HCT116 (cell line): ENCODE measurements at regions of chr12 and their contacts with region 1.

Region 1: DNA sequence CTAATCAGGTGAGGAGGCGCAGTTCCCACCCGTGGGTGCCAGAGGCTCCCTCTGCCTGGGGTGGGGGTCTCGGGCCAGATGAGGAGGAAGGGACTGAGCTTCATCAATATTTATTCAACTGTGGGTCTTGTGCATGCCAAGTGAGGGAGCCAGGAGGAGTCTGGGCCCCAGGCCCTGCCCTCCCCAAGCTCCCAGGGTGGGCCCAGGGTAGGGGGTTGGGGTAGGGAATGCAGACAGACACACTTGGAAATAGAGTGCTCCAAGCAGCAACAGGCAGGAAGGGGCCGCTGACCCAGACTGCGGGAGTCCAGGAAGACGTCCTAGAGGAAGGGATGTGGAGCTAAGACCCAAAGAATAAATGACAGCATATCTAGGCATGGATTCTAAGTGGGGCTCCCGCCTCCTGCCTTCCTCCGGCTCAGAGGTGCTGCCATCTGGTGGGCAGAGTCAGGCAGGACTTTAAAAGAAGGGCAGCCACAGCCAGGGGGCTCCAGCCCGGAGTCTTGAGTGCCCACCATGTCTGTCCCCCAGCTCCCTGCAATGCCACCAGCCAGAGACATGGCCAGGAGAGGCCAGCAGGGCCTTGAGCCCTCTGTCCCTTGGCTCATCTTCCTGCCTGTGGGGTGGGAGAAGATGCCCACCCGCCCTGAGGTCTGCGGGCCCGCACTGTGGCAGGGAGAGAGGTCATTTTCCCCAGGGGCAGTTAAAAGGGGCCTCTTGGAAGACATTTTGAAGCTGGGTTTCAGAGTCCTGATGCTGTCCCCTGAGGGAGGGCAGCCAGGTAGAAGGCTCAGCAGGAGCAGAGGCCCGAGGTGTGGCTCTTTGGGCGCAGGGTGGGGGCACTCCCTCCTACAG is 70.1 kb downstream of the PHETA1 start:
- DNase-seq: peak; percentile 33
- ATAC-seq: peak; percentile 94
- H3K4me3 ChIP-seq: no peak overlapping the region
- H3K27ac ChIP-seq: no peak overlapping the region
- H3K4me1 ChIP-seq: no peaks in the 10 kb centered on the region
- H3K27me3 ChIP-seq: no peaks in the 10 kb centered on the region
- CTCF ChIP-seq: peak; percentile 90 to 98 (median 95)
- POLR2A ChIP-seq: no peak
- RAD21 ChIP-seq: peak; percentile 75

Region 2: DNA sequence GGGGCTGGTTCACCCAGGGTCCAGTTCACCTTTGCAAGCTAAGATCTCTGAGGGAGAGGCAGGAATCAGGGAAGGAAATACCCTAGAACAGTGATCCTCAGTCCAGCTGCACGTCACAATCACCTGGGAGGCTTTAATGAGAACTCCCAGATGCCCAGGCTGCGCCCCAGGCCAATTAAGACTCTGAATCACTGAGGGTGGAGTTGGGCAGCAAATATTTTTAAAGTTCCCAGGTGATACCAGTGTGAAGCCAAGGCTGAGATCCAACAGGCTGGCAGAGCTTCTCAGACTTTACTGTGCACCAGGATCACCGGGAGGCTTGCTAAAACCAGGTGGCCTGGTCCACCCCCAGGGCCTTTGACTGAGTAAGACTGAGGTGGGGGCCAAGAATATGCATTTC is 402.2 kb before region 1 on chr12:
- CTCF ChIA-PET with region 1: interaction called, 9 read pairs
- POLR2A ChIA-PET with region 1: no interaction called
- RAD21 ChIA-PET with region 1: no interaction called
- intact Hi-C with region 1: loop called (anchors 2 kb)
- DNase-seq: no peak
- ATAC-seq: no peak
- H3K4me3 ChIP-seq: no peak overlapping the region
- H3K27ac ChIP-seq: no peak overlapping the region
- H3K4me1 ChIP-seq: peaks cover 0 to 37% of the 10 kb centered on the region in 2 experiments; a peak in 2 of 4 replicates
- H3K27me3 ChIP-seq: no peaks in the 10 kb centered on the region
- CTCF ChIP-seq: no peak
- POLR2A ChIP-seq: no peak
- RAD21 ChIP-seq: no peak

Region 3: DNA sequence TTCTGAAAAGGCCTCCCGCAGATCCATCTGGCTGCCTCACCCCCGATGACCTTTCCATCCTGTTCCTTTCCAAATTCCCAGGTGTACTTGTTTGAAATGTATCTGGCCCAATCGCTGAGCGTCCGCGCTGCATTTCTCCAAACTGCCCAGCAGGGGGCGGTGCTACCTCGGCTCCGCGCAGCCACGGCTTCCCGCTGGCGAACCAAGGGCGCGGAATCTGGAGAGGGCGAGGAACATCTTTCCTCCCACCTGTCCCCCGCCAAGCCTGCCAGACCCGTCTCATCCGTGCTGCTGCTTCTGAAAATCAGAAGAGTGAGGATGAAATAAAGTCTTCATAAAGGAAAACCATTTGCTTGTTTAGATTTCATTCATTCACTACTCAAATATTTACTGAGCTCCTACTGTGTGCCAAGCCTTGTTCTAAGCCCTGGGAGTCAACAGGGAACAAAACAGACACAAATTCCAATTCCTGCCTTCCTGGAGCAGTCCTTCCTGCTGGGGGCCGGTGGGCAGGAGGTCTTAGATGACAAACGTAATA is 361.6 kb before region 1 on chr12:
- CTCF ChIA-PET with region 1: no interaction called
- POLR2A ChIA-PET with region 1: interaction called, 3 read pairs
- RAD21 ChIA-PET with region 1: no interaction called
- intact Hi-C with region 1: loop called (anchors 5 kb)
- DNase-seq: peak; percentile 57
- ATAC-seq: peak; percentile 61
- H3K4me3 ChIP-seq: peak overlapping the region; percentile 23 to 41
- H3K27ac ChIP-seq: no peak overlapping the region
- H3K4me1 ChIP-seq: peaks cover 25 to 53% of the 10 kb centered on the region in 2 experiments
- H3K27me3 ChIP-seq: no peaks in the 10 kb centered on the region
- CTCF ChIP-seq: peak; percentile 68 to 93 (median 90)
- POLR2A ChIP-seq: no peak
- RAD21 ChIP-seq: peak; percentile 85